WTC11 (cell line): ENCODE measurements at regions of chr7 and their contacts with region 1.

Region 1: DNA sequence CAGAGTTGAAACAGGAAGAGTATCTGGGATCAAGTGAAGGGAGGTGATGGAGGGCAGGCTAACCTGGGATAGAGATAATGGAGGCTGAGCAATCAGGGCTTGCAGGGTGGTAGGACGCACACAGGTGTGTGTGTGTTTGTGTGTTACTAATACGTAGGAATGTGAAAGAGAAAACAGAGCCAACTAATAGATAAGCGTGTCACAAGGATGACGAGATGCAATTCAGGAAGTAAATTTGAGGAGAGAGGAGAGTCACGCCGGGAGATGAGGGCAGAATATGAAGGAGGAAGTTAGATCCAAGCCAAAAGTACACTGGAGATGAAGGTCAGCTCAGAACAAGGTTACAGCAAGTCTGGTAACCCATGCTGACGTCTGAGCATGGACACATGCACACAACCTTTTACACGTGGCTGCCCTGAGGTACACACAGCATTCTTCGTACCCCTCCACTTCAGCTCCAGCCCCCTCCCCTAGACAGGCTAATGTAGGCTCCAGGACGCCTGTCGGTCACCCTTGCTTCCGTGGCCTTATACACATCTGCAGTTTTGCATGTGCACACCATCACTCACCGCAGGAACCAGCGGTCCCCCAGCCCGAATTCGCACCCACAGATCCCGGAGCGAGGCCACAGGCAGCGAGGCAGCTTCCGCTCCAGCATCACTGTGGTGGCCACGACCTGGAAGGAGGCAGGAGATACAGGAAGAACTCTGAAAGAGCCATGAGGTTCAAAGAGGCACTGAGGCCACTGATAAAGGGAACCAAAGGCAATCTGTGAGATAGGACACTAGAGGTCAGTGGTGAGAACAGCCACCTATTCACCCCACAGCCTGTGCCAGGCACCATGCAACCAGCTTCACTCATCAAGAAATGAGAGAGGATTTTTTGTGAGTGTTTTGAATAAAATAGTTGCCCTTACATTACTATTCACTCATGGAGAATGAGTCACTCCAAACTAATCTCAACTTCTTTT is 23.7 kb upstream of the TRPV6 start:
- DNase-seq: no peak
- ATAC-seq: peak; percentile 98
- H3K4me3 Mint-ChIP-seq: no peak overlapping the region
- H3K27ac Mint-ChIP-seq: no peak overlapping the region
- H3K4me1 Mint-ChIP-seq: 0 out of 2 replicates have a peak, but pooled peaks cover 2% of the 10 kb centered on the region
- H3K27me3 Mint-ChIP-seq: peaks cover 3% of the 10 kb centered on the region; the same call in 1 of the 2 replicates
- CTCF ChIP-seq: no peak

Region 2: GRCh38 chr7:142798451-142799436 is 110.5 kb before region 1 on chr7:
- CTCF ChIA-PET with region 1: no interaction called
- POLR2A ChIA-PET with region 1: no interaction called
- DNase-seq: no peak
- ATAC-seq: no peak
- H3K4me3 Mint-ChIP-seq: peak overlapping the region; percentile 86
- H3K27ac Mint-ChIP-seq: no peak overlapping the region
- H3K4me1 Mint-ChIP-seq: peaks cover 52% of the 10 kb centered on the region
- H3K27me3 Mint-ChIP-seq: peaks cover 79% of the 10 kb centered on the region
- CTCF ChIP-seq: no peak

Region 3: GRCh38 chr7:142873281-142873787 is 35.9 kb before region 1 on chr7:
- CTCF ChIA-PET with region 1: interaction called, 12 read pairs
- POLR2A ChIA-PET with region 1: no interaction called
- DNase-seq: peak; percentile 69
- ATAC-seq: peak; percentile 88
- H3K4me3 Mint-ChIP-seq: no peak overlapping the region
- H3K27ac Mint-ChIP-seq: no peak overlapping the region
- H3K4me1 Mint-ChIP-seq: no peaks in the 10 kb centered on the region
- H3K27me3 Mint-ChIP-seq: no peaks in the 10 kb centered on the region
- CTCF ChIP-seq: peak; percentile 90

Region 4: DNA sequence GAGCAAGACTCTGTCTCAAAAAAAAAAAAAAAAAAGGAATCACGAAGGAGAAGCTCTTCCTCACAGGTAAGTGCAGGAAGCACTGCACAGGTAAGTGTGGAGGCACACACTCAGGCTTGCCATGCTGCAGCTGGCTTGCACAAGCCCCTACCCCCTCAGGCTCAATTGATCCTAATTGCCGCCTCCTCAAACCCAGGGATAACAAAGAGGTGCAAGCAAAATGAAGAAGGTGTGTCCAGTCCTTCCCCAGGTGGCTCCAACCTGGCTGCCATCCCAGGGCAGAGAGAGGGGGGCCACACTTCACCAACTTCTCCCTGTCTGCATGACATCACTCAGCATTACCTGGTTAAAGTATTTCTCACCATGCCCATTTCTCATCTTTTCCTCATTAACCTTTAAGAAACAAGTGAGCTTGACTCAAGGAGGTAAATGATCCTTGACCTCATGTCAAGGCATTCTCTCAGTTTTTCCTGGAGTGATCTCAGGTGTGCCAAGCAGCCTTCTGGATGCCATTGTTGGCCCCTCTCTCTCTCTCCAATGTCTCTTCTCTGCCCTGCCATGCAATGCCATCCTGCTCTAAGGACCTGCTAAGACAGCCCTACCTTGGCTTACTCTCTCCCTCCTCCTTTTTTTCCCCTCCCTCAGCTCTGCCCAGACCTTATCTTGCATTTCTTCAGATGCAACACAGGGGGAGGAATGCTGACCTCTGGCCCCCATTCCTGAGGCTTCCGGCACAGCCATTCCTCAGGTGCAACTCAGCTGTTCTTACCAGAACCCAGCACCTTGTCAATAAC is 10.6 kb before region 1 on chr7:
- CTCF ChIA-PET with region 1: interaction called, 10 read pairs
- POLR2A ChIA-PET with region 1: no interaction called
- DNase-seq: no peak
- ATAC-seq: peak; percentile 61
- H3K4me3 Mint-ChIP-seq: no peak overlapping the region
- H3K27ac Mint-ChIP-seq: no peak overlapping the region
- H3K4me1 Mint-ChIP-seq: peaks cover 13% of the 10 kb centered on the region
- H3K27me3 Mint-ChIP-seq: peaks cover 7% of the 10 kb centered on the region
- CTCF ChIP-seq: no peak

Region 5: GRCh38 chr7:142925413-142925812 is 16.2 kb after region 1 on chr7:
- CTCF ChIA-PET with region 1: interaction called, 10 read pairs
- POLR2A ChIA-PET with region 1: no interaction called
- DNase-seq: peak; percentile 70
- ATAC-seq: peak; percentile 98
- H3K4me3 Mint-ChIP-seq: no peak overlapping the region
- H3K27ac Mint-ChIP-seq: no peak overlapping the region
- H3K4me1 Mint-ChIP-seq: no peaks in the 10 kb centered on the region
- H3K27me3 Mint-ChIP-seq: peaks cover 33% of the 10 kb centered on the region
- CTCF ChIP-seq: peak; percentile 50